Activated B cell treated with CpG ODN at 0.5 μM for 24 hours (primary cell): ENCODE measurements at regions of chr4 and their contacts with region 1.

Region 1: DNA sequence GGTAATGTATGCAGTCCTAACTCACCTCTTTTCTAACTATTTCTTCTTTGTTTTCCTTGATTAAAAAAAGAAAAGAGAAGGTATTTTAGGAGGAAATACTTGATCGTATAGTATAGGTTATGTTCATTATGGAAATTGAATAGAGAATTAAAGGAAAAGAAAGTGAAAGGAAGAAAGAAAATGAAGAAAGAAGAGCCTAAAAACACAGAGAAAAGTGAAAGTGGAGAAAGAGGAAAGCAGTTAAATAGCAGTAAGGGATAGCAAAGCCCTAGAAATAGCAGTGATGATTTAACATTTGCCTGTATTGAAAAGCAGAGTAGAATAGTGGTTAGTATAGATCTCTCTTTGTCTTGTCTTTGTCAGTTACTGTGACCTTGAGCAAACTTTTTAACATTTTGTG is 37.0 kb downstream of the MRPL1 start:
- DNase-seq: no peak
- ATAC-seq: no peak
- H3K4me3 Mint-ChIP-seq: no peak overlapping the region
- H3K27ac Mint-ChIP-seq: no peak overlapping the region
- H3K4me1 Mint-ChIP-seq: peaks cover 26% of the 10 kb centered on the region
- H3K27me3 Mint-ChIP-seq: no peaks in the 10 kb centered on the region
- CTCF ChIP-seq: no peak

Region 2: DNA sequence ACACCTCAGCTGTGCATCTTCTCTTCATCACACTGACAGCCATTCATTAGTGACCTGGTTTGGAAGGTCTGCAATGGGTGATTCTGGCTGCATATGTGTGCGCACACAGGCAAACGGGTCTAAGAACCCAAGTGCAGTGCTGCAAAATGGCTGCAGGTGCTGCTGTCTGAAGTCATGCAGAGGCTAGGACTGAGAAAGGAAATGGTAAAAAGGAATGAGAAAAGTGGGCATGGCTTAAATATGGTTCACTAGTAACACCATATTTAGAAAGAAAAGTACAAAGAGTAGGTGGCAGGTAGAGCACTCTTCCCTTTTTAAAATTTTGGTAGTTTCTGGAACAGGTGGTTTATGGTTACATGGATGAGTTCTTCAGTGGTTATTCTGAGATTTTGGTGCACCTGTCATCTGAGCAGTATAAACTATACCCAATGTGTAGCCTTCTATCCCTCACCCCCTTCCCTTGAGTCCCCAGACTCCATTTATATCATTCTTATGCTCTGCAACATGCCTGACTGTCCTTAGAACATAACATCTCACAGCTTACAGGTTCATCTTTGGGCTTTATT is 664.2 kb before region 1 on chr4:
- CTCF ChIA-PET with region 1: no interaction called
- POLR2A ChIA-PET with region 1: no interaction called
- intact Hi-C with region 1: loop called (anchors 5 kb)
- DNase-seq: no peak
- ATAC-seq: no peak
- H3K4me3 Mint-ChIP-seq: no peak overlapping the region
- H3K27ac Mint-ChIP-seq: no peak overlapping the region
- H3K4me1 Mint-ChIP-seq: peaks cover 6% of the 10 kb centered on the region
- H3K27me3 Mint-ChIP-seq: no peaks in the 10 kb centered on the region
- CTCF ChIP-seq: no peak